ENCODE measurements at regions of chr12 and their contacts with region 1.

Region 1: GRCh38 chr12:53220801-53221202 is 11.2 kb downstream of the RARG start:
- DNase-seq: peak; percentile 96
- H3K4me3 Mint-ChIP-seq: peak overlapping the region; percentile 97
- H3K27ac Mint-ChIP-seq: peak overlapping the region; percentile 90
- H3K4me1 Mint-ChIP-seq: peaks cover 82% of the 10 kb centered on the region
- H3K27me3 Mint-ChIP-seq: peaks cover 1% of the 10 kb centered on the region

Region 2: DNA sequence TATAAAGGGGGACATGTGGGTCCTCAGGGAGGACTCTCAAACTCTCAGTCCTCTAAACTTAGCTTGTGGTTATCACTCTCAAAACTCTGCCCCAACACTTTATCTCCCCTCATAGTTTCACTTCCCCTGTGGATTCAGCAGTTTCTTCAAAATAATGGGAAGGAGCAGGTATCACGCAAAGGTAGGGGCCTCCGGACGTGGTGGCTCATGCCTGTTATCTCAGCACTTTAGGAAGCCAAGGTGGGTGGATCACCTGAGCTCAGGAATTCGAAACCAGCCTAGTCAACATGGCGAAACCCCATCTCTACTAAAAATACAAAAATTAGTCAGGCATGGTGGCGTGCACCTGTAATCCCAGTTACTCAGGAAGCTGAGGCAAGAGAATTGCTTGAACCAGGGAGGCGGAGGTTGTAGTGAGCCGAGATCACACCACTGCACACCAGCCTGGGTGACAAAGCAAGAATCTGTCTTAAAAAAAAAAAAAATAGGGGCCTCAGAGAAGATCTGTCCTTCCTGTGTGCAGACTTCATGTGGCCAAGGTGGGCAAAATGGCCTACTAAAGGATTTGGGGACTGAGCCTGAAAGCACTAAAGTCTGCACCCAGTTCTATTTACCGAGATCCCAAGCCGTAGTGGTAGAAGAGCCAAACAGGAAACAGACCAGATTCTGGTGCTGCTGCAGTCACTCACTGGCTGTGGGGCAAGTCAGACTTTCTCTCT is 20.2 kb before region 1 on chr12:
- intact Hi-C with region 1: loop called (anchors 2 kb)
- DNase-seq: peak; percentile 77
- H3K4me3 Mint-ChIP-seq: peak overlapping the region; percentile 77
- H3K27ac Mint-ChIP-seq: peak overlapping the region; percentile 85
- H3K4me1 Mint-ChIP-seq: peaks cover 53% of the 10 kb centered on the region
- H3K27me3 Mint-ChIP-seq: no peaks in the 10 kb centered on the region

Region 3: DNA sequence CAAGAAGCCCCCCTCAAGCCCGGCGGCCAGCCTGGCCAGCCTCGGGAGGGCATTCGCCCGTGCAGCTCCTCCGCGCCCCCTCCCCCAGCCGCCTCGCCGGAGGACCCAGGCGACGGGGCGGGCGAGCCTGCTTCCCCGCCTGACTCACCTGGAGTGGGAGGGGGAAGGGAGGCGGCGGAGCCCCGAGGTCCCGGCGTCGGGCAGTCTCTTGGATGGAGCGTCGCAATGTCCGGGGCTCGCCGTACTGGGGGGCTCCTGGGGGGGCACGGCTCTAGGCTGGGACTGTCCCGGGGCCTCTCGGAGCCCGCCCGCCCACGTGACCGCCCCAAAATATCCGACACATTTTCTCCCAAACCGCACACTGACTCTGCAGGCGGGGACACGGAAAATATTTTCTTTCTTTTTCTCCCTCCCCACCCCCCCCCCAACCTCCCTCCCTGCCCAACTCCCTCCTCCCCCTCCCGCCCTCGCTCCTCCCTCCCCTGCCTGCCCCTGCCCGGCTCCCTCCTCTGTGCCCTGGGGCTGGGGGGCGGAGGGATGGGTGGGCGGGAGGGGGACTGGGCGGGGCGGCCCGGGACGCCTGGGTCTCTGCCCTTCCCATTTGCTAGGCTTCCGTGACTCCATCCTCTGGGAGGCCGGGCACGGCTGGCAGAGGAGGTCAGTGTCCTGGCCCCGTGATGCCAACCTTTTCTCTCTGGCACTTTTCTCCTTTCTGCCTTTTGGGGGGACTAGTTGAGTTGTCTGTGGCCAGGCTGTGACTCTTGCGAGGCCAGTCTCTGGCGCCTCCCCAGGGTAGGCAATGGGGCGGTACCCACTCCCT is 11.2 kb after region 1 on chr12 and contains the start of gene RARG:
- intact Hi-C with region 1: loop called (anchors 1 kb)
- DNase-seq: peak; percentile 87
- H3K4me3 Mint-ChIP-seq: peak within 1 kb of the TSS; percentile 82
- H3K27ac Mint-ChIP-seq: peak within 1 kb of the TSS; percentile 85
- H3K4me1 Mint-ChIP-seq: peaks cover 61% of the 10 kb centered on the region
- H3K27me3 Mint-ChIP-seq: no peaks in the 10 kb centered on the region
- total RNA-seq, gene RARG: 57.2 and 58.5 TPM in 2 replicates

Region 4: GRCh38 chr12:53267999-53268647 is 47.3 kb after region 1 on chr12 and contains the start of gene ESPL1:
- intact Hi-C with region 1: loop called (anchors 1 kb)
- DNase-seq: peak; percentile 96
- H3K4me3 Mint-ChIP-seq: peak within 1 kb of the TSS; percentile 89
- H3K27ac Mint-ChIP-seq: peak within 1 kb of the TSS; percentile 92
- H3K4me1 Mint-ChIP-seq: peaks cover 51% of the 10 kb centered on the region
- H3K27me3 Mint-ChIP-seq: no peaks in the 10 kb centered on the region
- total RNA-seq, gene ESPL1: 71.8 and 76.7 TPM in 2 replicates

Region 5: GRCh38 chr12:53295070-53295890 is 74.5 kb after region 1 on chr12 and contains the start of gene PFDN5:
- intact Hi-C with region 1: loop called (anchors 1 kb)
- DNase-seq: peak; percentile 97
- H3K4me3 Mint-ChIP-seq: peak within 1 kb of the TSS; percentile 98
- H3K27ac Mint-ChIP-seq: peak within 1 kb of the TSS; percentile 90
- H3K4me1 Mint-ChIP-seq: peaks cover 33% of the 10 kb centered on the region
- H3K27me3 Mint-ChIP-seq: no peaks in the 10 kb centered on the region
- total RNA-seq, gene PFDN5: 319 and 342 TPM in 2 replicates

Region 6: GRCh38 chr12:53427905-53428594 is 207.2 kb after region 1 on chr12:
- intact Hi-C with region 1: no loop called
- DNase-seq: no peak
- H3K4me3 Mint-ChIP-seq: no peak overlapping the region
- H3K27ac Mint-ChIP-seq: peak overlapping the region; percentile 4
- H3K4me1 Mint-ChIP-seq: peaks cover 5% of the 10 kb centered on the region
- H3K27me3 Mint-ChIP-seq: no peaks in the 10 kb centered on the region